Thyroid gland (tissue), 4 donors: ENCODE measurements at regions of chr6 and their contacts with region 1.

Region 1: GRCh38 chr6:18115356-18115755 is 7.1 kb downstream of the NHLRC1 start:
- DNase-seq: no peak
- H3K4me3 ChIP-seq: no peak overlapping the region
- H3K27ac ChIP-seq: no peak overlapping the region
- H3K4me1 ChIP-seq: no peaks in the 10 kb centered on the region
- H3K27me3 ChIP-seq: no peaks in the 10 kb centered on the region
- CTCF ChIP-seq: no peak
- POLR2A ChIP-seq: no peak

Region 2: GRCh38 chr6:18004256-18004985 is 110.9 kb before region 1 on chr6:
- intact Hi-C with region 1: loop called (anchors 10 kb)
- DNase-seq: no peak
- H3K4me3 ChIP-seq: no peak overlapping the region
- H3K27ac ChIP-seq: no peak overlapping the region
- H3K4me1 ChIP-seq: peaks cover 0 to 5% of the 10 kb centered on the region in 2 donors
- H3K27me3 ChIP-seq: no peaks in the 10 kb centered on the region
- CTCF ChIP-seq: no peak
- POLR2A ChIP-seq: no peak